Heart right ventricle (tissue), 16 donors: ENCODE measurements at regions of chr1 and their contacts with region 1.

Region 1: GRCh38 chr1:62131093-62131725 is 63.4 kb upstream of the L1TD1 start:
- DNase-seq: peak in 1 of 2 donors; percentile 36
- ATAC-seq: peak in 6 of 8 donors; percentile 50 to 85 (median 72)
- H3K4me3 ChIP-seq: no peak overlapping the region
- H3K27ac ChIP-seq: no peak overlapping the region
- H3K4me1 ChIP-seq: no peaks in the 10 kb centered on the region
- H3K27me3 ChIP-seq: no peaks in the 10 kb centered on the region
- CTCF ChIP-seq: peak; percentile 58 to 88 (median 80)

Region 2: DNA sequence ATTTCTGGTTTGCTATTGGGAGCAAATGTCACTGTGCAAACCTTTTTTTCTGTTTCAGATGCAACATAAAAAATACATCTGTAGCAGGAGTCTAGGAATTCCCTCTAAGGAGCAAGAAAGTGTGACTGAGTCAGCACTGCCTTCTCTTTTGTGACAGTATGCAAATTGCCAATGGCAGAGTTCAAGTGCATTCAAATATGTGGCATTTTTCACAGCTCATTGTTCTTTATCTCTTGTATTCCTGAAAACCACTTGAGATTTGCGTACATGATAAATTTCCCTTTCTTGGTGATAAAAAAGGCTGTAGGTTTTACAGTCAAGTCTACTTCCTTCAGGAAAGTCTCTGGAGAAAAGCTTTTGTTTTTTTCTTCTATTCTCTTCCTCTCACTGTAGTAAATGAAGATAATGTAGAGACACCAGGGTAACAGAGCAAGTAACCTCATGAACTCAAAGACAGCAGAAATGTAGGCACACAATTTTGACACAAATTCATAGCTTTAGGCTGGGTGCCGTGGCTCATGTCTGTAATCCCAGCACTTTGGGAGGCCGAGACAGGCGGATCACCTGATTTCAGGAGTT is 66.3 kb before region 1 on chr1:
- intact Hi-C with region 1: no loop called
- DNase-seq: no peak
- ATAC-seq: no peak
- H3K4me3 ChIP-seq: no peak overlapping the region
- H3K27ac ChIP-seq: peak overlapping the region; percentile 24 to 92 (median 67)
- H3K4me1 ChIP-seq: peaks cover 0 to 54% (median 26%) of the 10 kb centered on the region in 9 donors
- H3K27me3 ChIP-seq: no peaks in the 10 kb centered on the region
- CTCF ChIP-seq: no peak

Region 3: DNA sequence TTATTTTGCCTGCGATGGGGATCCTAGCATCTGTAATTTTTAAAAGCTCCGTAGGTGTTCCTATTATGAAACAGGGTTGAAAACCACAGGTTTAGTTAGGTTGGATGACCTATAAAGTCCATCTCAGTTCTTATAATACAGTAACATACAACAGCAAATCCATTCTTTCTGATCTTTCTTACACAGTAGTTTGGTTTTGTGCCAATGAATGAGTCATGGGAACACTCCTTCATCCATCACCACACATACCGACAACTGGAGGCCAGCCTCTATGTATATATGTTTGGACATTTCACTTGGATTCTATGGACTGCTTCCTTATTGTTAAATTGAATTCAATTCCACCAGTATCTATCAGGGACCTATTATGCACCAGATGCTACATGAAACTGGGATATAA is 54.9 kb before region 1 on chr1:
- intact Hi-C with region 1: loop called in 6 of 10 experiments (anchors 5 to 10 kb)
- DNase-seq: no peak
- ATAC-seq: peak in 1 of 8 donors; percentile 41
- H3K4me3 ChIP-seq: no peak overlapping the region
- H3K27ac ChIP-seq: no peak overlapping the region
- H3K4me1 ChIP-seq: no peaks in the 10 kb centered on the region
- H3K27me3 ChIP-seq: no peaks in the 10 kb centered on the region
- CTCF ChIP-seq: no peak

Region 4: DNA sequence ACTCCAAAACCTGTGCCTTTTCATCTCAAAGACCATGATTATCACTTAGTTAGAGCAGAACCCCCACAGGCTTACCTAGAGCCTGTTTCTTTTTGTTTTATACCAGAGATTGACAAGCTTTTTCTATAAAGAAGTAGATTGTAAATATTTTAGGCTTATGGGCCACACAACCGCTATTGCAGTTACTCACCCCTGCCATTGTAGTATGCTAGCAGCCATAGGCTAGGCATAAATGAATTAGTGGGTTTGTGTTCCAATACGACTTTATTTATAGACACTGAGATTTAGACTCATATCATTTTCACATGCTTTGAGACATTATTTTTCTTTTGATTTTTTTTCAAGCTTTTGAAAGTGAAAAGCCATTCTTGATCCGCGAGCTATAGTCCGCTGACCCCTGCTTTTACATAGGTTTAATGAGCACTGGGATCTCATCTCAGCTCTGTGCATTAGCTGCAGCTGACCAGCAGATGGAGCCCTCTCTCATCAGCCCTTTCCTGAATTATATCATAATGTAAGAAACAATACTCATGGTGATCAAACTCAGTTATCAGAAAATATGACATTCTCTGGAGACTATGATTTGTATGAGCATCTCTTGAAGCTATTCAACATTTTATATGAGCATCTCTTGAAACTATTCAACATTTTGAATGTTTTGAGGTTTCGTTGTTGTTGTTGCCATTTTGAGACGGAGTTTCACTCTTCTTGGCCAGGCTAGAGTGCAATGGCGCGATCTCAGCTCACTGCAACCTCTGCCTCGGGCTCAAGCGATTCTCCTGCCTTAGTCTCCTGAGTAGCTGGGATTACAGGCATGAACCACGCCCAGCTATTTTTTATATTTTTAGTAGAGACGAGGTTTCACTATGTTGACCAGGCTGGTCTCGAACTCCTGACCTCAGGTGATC is 48.5 kb before region 1 on chr1:
- intact Hi-C with region 1: loop called in 8 of 10 experiments (anchors 2 to 10 kb)
- DNase-seq: peak in 1 of 2 donors; percentile 15
- ATAC-seq: peak in 3 of 8 donors; percentile 39 to 68 (median 58)
- H3K4me3 ChIP-seq: no peak overlapping the region
- H3K27ac ChIP-seq: no peak overlapping the region
- H3K4me1 ChIP-seq: peaks cover 0 to 15% (median 6%) of the 10 kb centered on the region in 9 donors
- H3K27me3 ChIP-seq: no peaks in the 10 kb centered on the region
- CTCF ChIP-seq: peak; percentile 66 to 93 (median 89)

Region 5: DNA sequence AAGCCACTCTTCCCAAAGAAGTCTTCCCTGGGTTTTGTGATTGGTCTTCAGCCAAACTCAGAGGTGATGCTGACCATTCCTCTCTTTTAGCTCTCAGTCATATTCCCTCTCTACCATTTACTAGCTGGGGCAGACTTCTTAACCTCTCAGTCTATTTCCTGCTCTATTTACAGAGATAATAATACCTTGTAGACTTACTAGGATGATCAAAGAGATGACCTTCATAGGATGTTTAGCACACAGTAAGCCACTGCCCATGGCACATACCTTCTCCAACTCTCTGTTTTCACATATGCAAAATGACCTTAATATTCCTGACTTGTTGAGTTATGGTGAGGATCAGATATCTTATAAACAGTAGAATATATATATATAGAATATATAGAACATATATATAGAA is 42.8 kb before region 1 on chr1:
- intact Hi-C with region 1: loop called in 7 of 10 experiments (anchors 2 to 10 kb)
- DNase-seq: no peak
- ATAC-seq: no peak
- H3K4me3 ChIP-seq: no peak overlapping the region
- H3K27ac ChIP-seq: no peak overlapping the region
- H3K4me1 ChIP-seq: peaks cover 0 to 22% (median 6%) of the 10 kb centered on the region in 9 donors
- H3K27me3 ChIP-seq: no peaks in the 10 kb centered on the region
- CTCF ChIP-seq: no peak

Region 6: DNA sequence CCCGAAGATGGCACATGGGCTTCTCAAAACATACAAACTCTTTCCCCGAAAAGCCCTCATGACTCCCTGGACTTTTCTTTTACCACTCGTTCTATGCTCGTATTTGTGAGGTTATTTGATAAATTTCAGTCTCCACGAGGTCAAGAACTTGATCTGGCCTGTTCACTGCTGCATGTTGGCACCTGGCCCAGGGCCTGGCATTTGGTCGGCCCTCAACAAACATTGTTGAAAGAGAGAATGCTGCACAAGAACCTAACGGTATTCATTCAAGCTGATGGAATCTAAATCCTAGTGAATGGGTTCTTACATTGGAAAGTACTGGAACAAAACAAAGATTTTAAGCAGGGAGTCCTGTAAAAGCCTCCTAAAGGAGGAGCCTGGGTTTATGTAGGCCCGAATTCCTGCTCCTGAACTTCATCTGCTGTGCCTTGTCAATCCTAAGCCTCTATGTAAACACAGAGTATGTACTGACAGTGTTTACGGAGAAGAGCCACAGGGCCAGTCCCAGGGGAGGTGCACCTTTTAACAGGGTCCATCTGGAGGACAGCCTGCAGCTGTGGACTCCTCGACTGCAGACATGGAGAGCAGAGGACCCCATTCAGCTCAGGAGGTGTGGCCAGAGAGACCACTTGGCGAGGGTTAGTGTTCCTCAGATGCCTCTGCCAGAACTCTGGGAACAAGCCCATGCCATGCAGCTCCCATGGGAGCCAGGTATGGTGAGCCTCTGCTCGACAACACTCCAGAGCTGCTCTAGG is 110.3 kb after region 1 on chr1:
- intact Hi-C with region 1: no loop called
- DNase-seq: peak in 1 of 2 donors; percentile 47
- ATAC-seq: no peak
- H3K4me3 ChIP-seq: no peak overlapping the region
- H3K27ac ChIP-seq: no peak overlapping the region
- H3K4me1 ChIP-seq: peaks cover 0 to 16% (median 9%) of the 10 kb centered on the region in 9 donors
- H3K27me3 ChIP-seq: peaks cover 0 to 4% (median 0%) of the 10 kb centered on the region in 7 donors
- CTCF ChIP-seq: no peak